Sigmoid colon (tissue), 7 donors: ENCODE measurements at regions of chr7 and their contacts with region 1.

Region 1: GRCh38 chr7:28096713-28097112 is 83.9 kb downstream of the JAZF1 start:
- DNase-seq: peak; percentile 83
- H3K4me3 ChIP-seq: no peak overlapping the region
- H3K27ac ChIP-seq: peak overlapping the region; percentile 21 to 73 (median 54)
- H3K4me1 ChIP-seq: peaks cover 0 to 77% (median 50%) of the 10 kb centered on the region in 4 donors
- H3K27me3 ChIP-seq: no peaks in the 10 kb centered on the region
- CTCF ChIP-seq: peak; percentile 82 to 88 (median 86)
- EP300 ChIP-seq: no peak
- POLR2A ChIP-seq: no peak

Region 2: DNA sequence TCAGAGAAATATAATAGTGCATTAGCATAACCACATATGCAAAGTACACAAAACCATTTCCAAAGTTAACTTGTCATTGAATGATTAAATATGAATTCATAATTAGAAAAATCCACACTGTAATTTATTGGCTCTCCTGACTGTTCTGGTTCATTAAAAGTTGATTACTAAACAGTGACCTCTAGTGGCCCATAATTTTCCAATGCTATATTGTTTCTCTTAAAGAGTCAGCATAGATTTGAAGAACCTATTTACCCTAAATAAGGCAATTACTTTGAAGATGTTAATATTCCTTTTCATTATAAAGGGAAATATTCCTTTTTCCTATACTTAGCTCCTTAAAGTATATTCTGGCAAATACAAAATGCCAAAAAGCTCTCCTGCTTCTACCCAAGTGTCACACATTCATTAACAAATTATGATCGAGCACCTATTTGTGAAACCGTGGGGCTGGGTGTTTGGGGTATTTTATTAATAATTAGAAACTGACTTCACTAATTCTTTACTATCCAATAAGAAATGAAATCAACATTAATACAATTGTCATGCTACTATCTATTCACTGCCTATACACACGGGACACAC is 520.3 kb before region 1 on chr7:
- intact Hi-C with region 1: loop called (anchors 10 kb)
- DNase-seq: no peak
- H3K4me3 ChIP-seq: no peak overlapping the region
- H3K27ac ChIP-seq: no peak overlapping the region
- H3K4me1 ChIP-seq: no peaks in the 10 kb centered on the region
- H3K27me3 ChIP-seq: no peaks in the 10 kb centered on the region
- CTCF ChIP-seq: peak in 3 of 4 experiments; percentile 23 to 58 (median 47)
- EP300 ChIP-seq: no peak
- POLR2A ChIP-seq: no peak

Region 3: GRCh38 chr7:27774717-27775328 is 321.9 kb before region 1 on chr7:
- intact Hi-C with region 1: loop called (anchors 10 kb)
- DNase-seq: no peak
- H3K4me3 ChIP-seq: no peak overlapping the region
- H3K27ac ChIP-seq: no peak overlapping the region
- H3K4me1 ChIP-seq: peaks cover 0 to 12% (median 0%) of the 10 kb centered on the region in 4 donors
- H3K27me3 ChIP-seq: no peaks in the 10 kb centered on the region
- CTCF ChIP-seq: peak in 3 of 4 experiments; percentile 25 to 52 (median 41)
- EP300 ChIP-seq: no peak
- POLR2A ChIP-seq: no peak

Region 4: DNA sequence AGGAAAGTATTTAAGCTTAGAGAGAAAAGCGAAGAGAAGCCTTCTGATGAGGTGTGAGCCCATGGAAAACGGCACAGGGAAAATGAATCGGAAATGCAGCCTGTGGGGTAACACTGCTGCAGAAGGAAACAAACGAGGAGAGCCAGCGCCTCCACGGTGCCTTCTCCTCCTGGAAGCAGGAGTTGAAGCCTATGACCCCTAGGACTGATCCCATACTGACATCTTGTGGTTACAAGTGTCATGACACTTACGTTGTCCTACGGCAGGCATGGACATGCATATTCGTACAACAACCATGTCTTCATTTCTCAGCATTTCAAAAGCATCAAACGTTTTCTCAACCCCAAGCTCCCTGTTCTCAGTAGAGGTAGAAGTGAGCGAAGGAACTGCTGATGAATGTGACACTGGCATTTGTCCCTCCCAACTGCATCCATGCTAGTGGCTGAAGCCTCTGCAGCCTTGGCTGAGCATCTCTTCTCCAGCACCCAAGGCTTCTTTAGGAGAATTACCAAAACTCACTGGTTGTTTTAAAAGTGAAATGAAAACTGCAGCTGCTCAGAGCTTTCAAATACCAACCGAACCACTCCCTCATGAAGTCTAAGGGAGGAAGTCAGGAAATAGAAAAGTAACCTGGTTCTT is 76.3 kb before region 1 on chr7:
- intact Hi-C with region 1: loop called (anchors 2 kb)
- DNase-seq: peak; percentile 88
- H3K4me3 ChIP-seq: no peak overlapping the region
- H3K27ac ChIP-seq: peak overlapping the region in 2 of 4 donors; percentile 75 to 76
- H3K4me1 ChIP-seq: peaks cover 0 to 70% (median 56%) of the 10 kb centered on the region in 4 donors
- H3K27me3 ChIP-seq: no peaks in the 10 kb centered on the region
- CTCF ChIP-seq: peak; percentile 79 to 84 (median 83)
- EP300 ChIP-seq: no peak
- POLR2A ChIP-seq: no peak

Region 5: DNA sequence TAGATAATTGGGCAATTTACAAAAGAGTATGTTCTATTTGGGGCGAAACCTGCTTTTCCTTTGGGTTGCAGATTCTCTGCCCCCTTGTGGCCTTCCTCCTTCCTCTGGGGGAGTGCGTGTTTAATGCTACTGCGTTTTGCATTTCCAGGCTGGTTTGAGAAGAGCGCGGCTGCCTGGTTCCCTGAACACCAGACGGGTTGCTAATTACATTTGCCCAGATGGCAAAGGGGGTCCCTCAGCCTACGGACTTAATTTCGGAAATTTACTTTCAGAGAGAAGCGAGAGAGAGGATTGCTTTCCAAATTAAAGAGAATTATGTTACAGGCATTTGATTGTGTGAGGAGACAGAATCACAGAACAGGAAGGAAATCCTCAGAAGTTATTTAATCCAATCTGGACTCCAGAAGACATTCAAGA is 175.8 kb after region 1 on chr7:
- intact Hi-C with region 1: loop called (anchors 5 kb)
- DNase-seq: peak; percentile 70
- H3K4me3 ChIP-seq: peak overlapping the region in 2 of 4 donors; percentile 12
- H3K27ac ChIP-seq: no peak overlapping the region
- H3K4me1 ChIP-seq: peaks cover 0 to 6% (median 0%) of the 10 kb centered on the region in 4 donors
- H3K27me3 ChIP-seq: no peaks in the 10 kb centered on the region
- CTCF ChIP-seq: peak; percentile 40 to 65 (median 48)
- EP300 ChIP-seq: no peak
- POLR2A ChIP-seq: no peak